Naive thymus-derived CD4-positive, alpha-beta T cell (primary cell): ENCODE measurements at regions of chrX and their contacts with region 1.

Region 1: DNA sequence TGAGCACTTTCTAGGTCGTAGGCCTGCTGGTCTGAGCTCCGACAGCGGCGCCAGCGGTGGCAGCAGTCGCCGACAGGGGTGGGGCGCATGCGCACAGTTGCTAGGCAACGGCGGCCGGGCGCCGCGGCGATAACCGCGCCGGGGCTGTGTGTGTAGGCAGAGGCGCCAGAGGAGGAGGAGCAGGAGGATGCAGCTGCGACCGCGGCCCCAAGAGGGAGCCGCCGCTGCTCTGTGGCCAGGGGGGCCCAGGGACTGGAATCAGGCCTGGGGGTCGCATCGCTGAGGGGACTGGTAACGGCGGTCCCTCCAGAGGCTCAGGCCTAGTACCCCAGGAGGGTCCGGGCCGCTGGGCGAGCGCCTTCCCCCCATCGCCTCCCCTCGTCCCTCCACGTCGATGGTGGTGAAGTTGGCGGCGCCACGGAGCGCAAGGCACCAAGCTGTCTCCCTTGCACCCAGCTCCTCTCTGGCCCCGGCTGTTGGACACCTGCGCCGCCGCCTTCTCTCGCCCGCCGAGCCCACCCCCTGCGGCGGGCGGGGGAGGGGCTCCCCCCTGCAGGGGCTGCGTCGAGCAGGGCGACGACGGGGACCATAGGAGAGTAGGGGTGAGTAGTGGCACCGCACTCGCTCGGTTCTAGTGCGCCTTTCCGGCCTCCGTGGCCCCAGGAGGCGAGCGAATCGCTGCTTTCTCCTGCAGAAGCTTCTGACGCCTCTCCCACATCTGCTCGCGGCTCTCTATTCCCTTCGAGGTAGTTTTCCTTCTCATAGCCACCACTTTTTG is 58.6 kb upstream of the ZC4H2 start:
- DNase-seq: peak; percentile 63 to 84 (median 78)
- ATAC-seq: peak; percentile 94
- H3K4me3 ChIP-seq: peak within 1 kb of the TSS; percentile 78
- H3K4me3 Mint-ChIP-seq: peak within 1 kb of the TSS; percentile 87 to 98 (median 94)
- H3K27ac ChIP-seq: peak within 1 kb of the TSS; percentile 76
- H3K27ac Mint-ChIP-seq: peak within 1 kb of the TSS; percentile 90 to 98 (median 96)
- H3K4me1 ChIP-seq: no peaks in the 10 kb centered on the region
- H3K4me1 Mint-ChIP-seq: peaks cover 4 to 64% (median 51%) of the 10 kb centered on the region in 7 donors
- H3K27me3 ChIP-seq: no peaks in the 10 kb centered on the region
- H3K27me3 Mint-ChIP-seq: no peaks in the 10 kb centered on the region

Region 2: DNA sequence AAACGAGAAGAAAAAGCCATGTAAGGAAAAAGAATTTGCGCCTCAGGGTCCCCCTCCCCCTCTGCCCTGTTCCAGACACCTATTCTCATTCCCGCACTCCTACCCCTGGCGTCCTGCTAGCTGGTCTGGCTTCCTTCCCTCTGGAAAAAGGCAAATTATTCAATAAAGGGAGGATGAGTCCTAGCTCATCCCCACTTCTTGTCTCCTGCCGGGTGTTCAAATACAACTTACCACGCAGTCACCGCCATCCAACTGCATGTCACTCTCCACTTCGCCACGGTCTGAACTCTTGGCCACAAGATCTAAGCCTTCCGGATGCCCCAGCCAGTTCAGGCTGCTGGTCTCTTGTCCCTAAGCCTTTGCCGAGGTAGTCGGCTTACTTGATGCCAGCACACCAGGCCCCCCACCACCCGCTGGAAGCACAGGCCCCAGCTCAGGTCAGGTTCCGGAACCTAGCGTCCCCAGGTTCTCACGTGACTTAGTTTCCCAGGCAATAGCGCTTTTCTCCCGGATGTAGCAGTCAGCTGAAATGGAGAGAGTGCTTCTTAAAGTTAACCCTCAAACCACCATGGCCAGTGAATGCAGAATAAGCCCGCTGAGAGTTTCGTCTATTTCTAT is 1474.1 kb before region 1 on chrX:
- CTCF ChIA-PET with region 1: no interaction called
- POLR2A ChIA-PET with region 1: no interaction called
- intact Hi-C with region 1: loop called in 1 of 2 experiments (anchors 5 kb)
- DNase-seq: peak; percentile 7 to 71 (median 63)
- ATAC-seq: peak; percentile 89
- H3K4me3 ChIP-seq: peak overlapping the region; percentile 87
- H3K4me3 Mint-ChIP-seq: peak overlapping the region; percentile 93 to 100 (median 96)
- H3K27ac ChIP-seq: peak overlapping the region; percentile 59
- H3K27ac Mint-ChIP-seq: peak overlapping the region; percentile 86 to 97 (median 92)
- H3K4me1 ChIP-seq: peaks cover 0 to 4% of the 10 kb centered on the region in 2 donors
- H3K4me1 Mint-ChIP-seq: peaks cover 3 to 34% (median 20%) of the 10 kb centered on the region in 7 donors
- H3K27me3 ChIP-seq: no peaks in the 10 kb centered on the region
- H3K27me3 Mint-ChIP-seq: no peaks in the 10 kb centered on the region

Region 3: GRCh38 chrX:64205735-64206491 is 828.9 kb before region 1 on chrX:
- CTCF ChIA-PET with region 1: interaction called, 3 read pairs
- POLR2A ChIA-PET with region 1: no interaction called
- intact Hi-C with region 1: loop called in 1 of 2 experiments (anchors 5 kb)
- DNase-seq: peak; percentile 70 to 88 (median 86)
- ATAC-seq: peak; percentile 95
- H3K4me3 ChIP-seq: peak overlapping the region; percentile 71
- H3K4me3 Mint-ChIP-seq: peak overlapping the region; percentile 83 to 94 (median 90)
- H3K27ac ChIP-seq: peak overlapping the region; percentile 77
- H3K27ac Mint-ChIP-seq: peak overlapping the region; percentile 82 to 95 (median 93)
- H3K4me1 ChIP-seq: peaks cover 6 to 7% of the 10 kb centered on the region in 2 donors
- H3K4me1 Mint-ChIP-seq: peaks cover 9 to 25% (median 13%) of the 10 kb centered on the region in 7 donors
- H3K27me3 ChIP-seq: no peaks in the 10 kb centered on the region
- H3K27me3 Mint-ChIP-seq: no peaks in the 10 kb centered on the region

Region 4: DNA sequence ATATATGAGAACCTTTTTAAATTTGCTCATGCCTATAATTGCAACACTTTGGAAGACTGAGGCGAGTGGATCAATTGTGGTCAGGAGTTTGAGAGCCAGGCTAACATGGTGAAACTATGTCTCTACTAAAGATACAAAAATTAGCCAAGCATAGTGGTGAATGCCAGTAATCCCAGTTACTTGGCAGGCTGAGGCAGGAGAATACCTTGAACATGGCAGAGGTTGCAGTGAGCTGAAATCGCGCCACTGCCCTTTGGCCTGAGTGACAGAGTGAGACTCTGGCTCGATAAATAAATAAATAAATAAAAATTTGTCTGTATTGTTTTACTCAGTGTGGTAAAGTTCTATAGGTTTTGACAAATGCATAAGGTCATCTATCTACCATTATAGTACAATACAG is 276.8 kb before region 1 on chrX:
- CTCF ChIA-PET with region 1: no interaction called
- POLR2A ChIA-PET with region 1: no interaction called
- intact Hi-C with region 1: loop called in 1 of 2 experiments (anchors 1 kb)
- DNase-seq: no peak
- ATAC-seq: no peak
- H3K4me3 ChIP-seq: no peak overlapping the region
- H3K4me3 Mint-ChIP-seq: no peak overlapping the region
- H3K27ac ChIP-seq: no peak overlapping the region
- H3K27ac Mint-ChIP-seq: no peak overlapping the region
- H3K4me1 ChIP-seq: peaks cover 3 to 5% of the 10 kb centered on the region in 2 donors
- H3K4me1 Mint-ChIP-seq: peaks cover 0 to 27% (median 14%) of the 10 kb centered on the region in 7 donors
- H3K27me3 ChIP-seq: no peaks in the 10 kb centered on the region
- H3K27me3 Mint-ChIP-seq: no peaks in the 10 kb centered on the region

Region 5: GRCh38 chrX:65127842-65128241 is 93.0 kb after region 1 on chrX:
- CTCF ChIA-PET with region 1: interaction called, 6 read pairs
- POLR2A ChIA-PET with region 1: no interaction called
- intact Hi-C with region 1: loop called in 1 of 2 experiments (anchors 2 kb)
- DNase-seq: peak in 6 of 9 donors; percentile 18 to 63 (median 48)
- ATAC-seq: peak; percentile 55
- H3K4me3 ChIP-seq: no peak overlapping the region
- H3K4me3 Mint-ChIP-seq: peak overlapping the region; percentile 28 to 67 (median 58)
- H3K27ac ChIP-seq: peak overlapping the region; percentile 8
- H3K27ac Mint-ChIP-seq: peak overlapping the region; percentile 29 to 94 (median 66)
- H3K4me1 ChIP-seq: peaks cover 0 to 12% of the 10 kb centered on the region in 2 donors
- H3K4me1 Mint-ChIP-seq: peaks cover 11 to 57% (median 28%) of the 10 kb centered on the region in 7 donors
- H3K27me3 ChIP-seq: no peaks in the 10 kb centered on the region
- H3K27me3 Mint-ChIP-seq: no peaks in the 10 kb centered on the region

Region 6: GRCh38 chrX:65534450-65535292 is 499.8 kb after region 1 on chrX and contains the start of gene LAS1L:
- CTCF ChIA-PET with region 1: no interaction called
- POLR2A ChIA-PET with region 1: interaction called, 3 read pairs
- intact Hi-C with region 1: loop called (anchors 1 to 2 kb)
- DNase-seq: peak; percentile 71 to 94 (median 90)
- ATAC-seq: peak; percentile 99
- H3K4me3 ChIP-seq: peak within 1 kb of the TSS; percentile 96
- H3K4me3 Mint-ChIP-seq: peak within 1 kb of the TSS; percentile 97 to 100 (median 100)
- H3K27ac ChIP-seq: peak within 1 kb of the TSS; percentile 75
- H3K27ac Mint-ChIP-seq: peak within 1 kb of the TSS; percentile 94 to 100 (median 98)
- H3K4me1 ChIP-seq: peaks cover 10 to 13% of the 10 kb centered on the region in 2 donors
- H3K4me1 Mint-ChIP-seq: peaks cover 5 to 28% (median 16%) of the 10 kb centered on the region in 7 donors
- H3K27me3 ChIP-seq: no peaks in the 10 kb centered on the region
- H3K27me3 Mint-ChIP-seq: no peaks in the 10 kb centered on the region
- total RNA-seq, gene LAS1L: 37.2 to 48.9 (median 44.9) TPM